ENCODE measurements at regions of chr4 and their contacts with region 1.

Region 1: DNA sequence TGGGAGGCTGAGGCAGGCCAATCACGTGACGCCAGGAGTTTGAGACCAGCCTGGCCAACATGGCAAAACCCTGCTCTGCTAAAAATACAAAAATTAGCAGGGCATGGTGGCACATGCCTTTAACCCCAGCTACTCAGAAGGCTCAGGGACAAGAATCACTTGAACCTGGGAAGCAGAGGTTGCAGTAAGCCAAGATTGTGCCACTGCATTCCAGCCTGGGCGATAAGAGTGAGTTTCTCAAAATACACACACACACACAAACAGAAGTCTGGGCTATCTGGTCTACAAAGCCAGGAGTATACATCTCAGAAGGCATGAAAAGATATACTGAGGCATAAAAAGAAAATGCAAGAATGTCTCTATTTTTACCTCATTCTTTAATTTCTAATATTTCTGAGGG is 11.3 kb downstream of the YTHDC1 start:
- DNase-seq: no peak
- ATAC-seq: no peak
- H3K4me3 ChIP-seq: no peak overlapping the region
- H3K27ac ChIP-seq: no peak overlapping the region
- H3K4me1 ChIP-seq: peaks cover 6% of the 10 kb centered on the region; the same call in 1 of the 2 replicates
- H3K27me3 ChIP-seq: no peaks in the 10 kb centered on the region; a peak in 1 of 5 replicates
- CTCF ChIP-seq: no peak
- EP300 ChIP-seq: no peak
- POLR2A ChIP-seq: no peak
- RAD21 ChIP-seq: no peak

Region 2: DNA sequence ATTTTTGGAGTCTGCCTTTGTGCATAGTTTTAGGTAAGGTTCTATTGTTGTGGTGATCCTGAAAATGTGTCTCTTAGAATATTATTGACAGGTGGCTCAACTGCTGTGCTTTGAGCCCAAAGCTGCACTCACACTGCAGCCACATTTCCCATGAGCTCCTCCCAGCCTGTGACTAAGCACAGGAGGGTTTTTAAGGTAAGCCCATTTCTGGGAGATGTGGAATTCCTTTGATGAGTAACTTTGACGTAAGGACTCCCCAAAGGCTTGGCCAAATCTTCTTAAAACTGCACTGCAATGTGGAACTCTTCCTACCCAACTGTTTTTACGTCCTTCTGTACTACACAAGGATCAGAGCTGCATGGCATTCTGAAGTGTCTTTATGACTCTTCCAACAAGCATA is 355.3 kb before region 1 on chr4:
- CTCF ChIA-PET with region 1: no interaction called
- POLR2A ChIA-PET with region 1: no interaction called
- in situ Hi-C with region 1: no loop called
- intact Hi-C with region 1: no loop called
- DNase-seq: no peak
- ATAC-seq: no peak
- H3K4me3 ChIP-seq: no peak overlapping the region
- H3K27ac ChIP-seq: no peak overlapping the region
- H3K4me1 ChIP-seq: no peaks in the 10 kb centered on the region
- H3K27me3 ChIP-seq: no peaks in the 10 kb centered on the region
- CTCF ChIP-seq: no peak
- EP300 ChIP-seq: no peak
- POLR2A ChIP-seq: no peak
- RAD21 ChIP-seq: no peak

Region 3: GRCh38 chr4:68299492-68300457 is 38.8 kb before region 1 on chr4:
- CTCF ChIA-PET with region 1: no interaction called
- POLR2A ChIA-PET with region 1: no interaction called
- in situ Hi-C with region 1: no loop called
- intact Hi-C with region 1: loop called (anchors 5 kb)
- DNase-seq: peak; percentile 53
- ATAC-seq: peak; percentile 86
- H3K4me3 ChIP-seq: no peak overlapping the region; a peak in 1 of 6 replicates
- H3K27ac ChIP-seq: no peak overlapping the region
- H3K4me1 ChIP-seq: peaks cover 27% of the 10 kb centered on the region
- H3K27me3 ChIP-seq: no peaks in the 10 kb centered on the region
- CTCF ChIP-seq: no peak
- EP300 ChIP-seq: peak in 1 of 2 experiments; percentile 68; a peak in 1 of 4 replicates
- POLR2A ChIP-seq: no peak
- RAD21 ChIP-seq: no peak

Region 4: GRCh38 chr4:68433582-68433981 is 95.0 kb after region 1 on chr4:
- CTCF ChIA-PET with region 1: no interaction called
- POLR2A ChIA-PET with region 1: no interaction called
- in situ Hi-C with region 1: no loop called
- intact Hi-C with region 1: no loop called
- DNase-seq: no peak
- ATAC-seq: no peak
- H3K4me3 ChIP-seq: no peak overlapping the region
- H3K27ac ChIP-seq: no peak overlapping the region
- H3K4me1 ChIP-seq: no peaks in the 10 kb centered on the region
- H3K27me3 ChIP-seq: 0 out of 5 replicates have a peak, but pooled peaks cover 0 to 7% of the 10 kb centered on the region in 2 experiments
- CTCF ChIP-seq: no peak
- EP300 ChIP-seq: no peak
- POLR2A ChIP-seq: no peak
- RAD21 ChIP-seq: no peak

Region 5: GRCh38 chr4:68466185-68466584 is 127.6 kb after region 1 on chr4:
- CTCF ChIA-PET with region 1: no interaction called
- POLR2A ChIA-PET with region 1: no interaction called
- in situ Hi-C with region 1: no loop called
- intact Hi-C with region 1: no loop called
- DNase-seq: no peak
- ATAC-seq: no peak
- H3K4me3 ChIP-seq: no peak overlapping the region
- H3K27ac ChIP-seq: no peak overlapping the region
- H3K4me1 ChIP-seq: no peaks in the 10 kb centered on the region
- H3K27me3 ChIP-seq: no peaks in the 10 kb centered on the region
- CTCF ChIP-seq: no peak
- EP300 ChIP-seq: no peak
- POLR2A ChIP-seq: no peak
- RAD21 ChIP-seq: no peak